Left ventricle myocardium inferior (tissue), 1 donor: ENCODE measurements at regions of chr11 and their contacts with region 1.

Region 1: DNA sequence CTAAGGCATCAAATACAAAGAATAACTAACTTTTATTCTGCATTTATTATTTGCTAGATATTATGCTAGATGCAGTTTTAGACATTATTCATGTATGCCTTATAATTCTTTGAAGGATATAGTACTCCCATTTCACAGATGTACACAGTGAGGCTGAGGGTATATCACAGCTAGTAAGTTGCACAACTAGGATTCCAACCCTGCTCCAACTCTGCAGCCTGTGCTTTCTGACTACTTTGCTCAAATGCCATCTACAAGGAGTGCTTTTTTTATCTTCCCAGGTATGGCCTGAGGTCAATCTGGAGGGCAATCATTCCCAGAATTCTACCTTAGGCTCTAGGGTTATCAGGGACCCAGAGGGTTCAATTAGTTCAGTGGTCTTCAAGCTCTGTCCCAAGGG is 28.4 kb downstream of the NUP160 start:
- DNase-seq: no peak
- H3K4me3 ChIP-seq: no peak overlapping the region
- H3K27ac ChIP-seq: no peak overlapping the region
- H3K4me1 ChIP-seq: no peaks in the 10 kb centered on the region
- H3K27me3 ChIP-seq: no peaks in the 10 kb centered on the region
- CTCF ChIP-seq: no peak

Region 2: DNA sequence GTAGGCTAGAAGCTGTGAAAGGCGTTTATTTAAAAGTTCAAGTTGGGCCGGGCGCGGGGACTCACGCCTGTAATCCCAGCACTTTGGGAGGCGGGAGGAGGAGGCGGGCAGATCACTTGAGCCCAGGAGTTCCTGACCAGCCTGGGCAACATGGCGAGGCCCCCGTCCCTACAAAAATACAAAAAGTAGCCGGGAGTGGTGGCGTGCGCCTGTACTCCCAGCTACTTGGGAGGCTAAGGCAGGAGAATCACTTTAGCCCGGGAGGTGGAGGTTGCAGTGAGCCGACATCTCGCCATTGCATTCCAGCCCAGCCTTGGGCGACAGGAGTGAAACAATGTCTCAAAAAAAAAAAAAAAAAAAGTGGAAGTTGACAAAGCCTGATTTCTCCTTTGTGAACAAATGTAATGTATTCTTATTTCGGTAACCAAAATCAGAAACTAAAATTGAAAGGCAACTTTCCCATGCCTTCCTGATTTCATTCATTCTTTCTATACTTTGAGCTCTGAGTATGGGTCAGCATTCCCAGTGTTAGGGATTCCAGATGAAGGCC is 253.5 kb before region 1 on chr11:
- intact Hi-C with region 1: no loop called
- DNase-seq: no peak
- H3K4me3 ChIP-seq: peak overlapping the region; percentile 98
- H3K27ac ChIP-seq: peak overlapping the region; percentile 82
- H3K4me1 ChIP-seq: peaks cover 28% of the 10 kb centered on the region
- H3K27me3 ChIP-seq: no peaks in the 10 kb centered on the region
- CTCF ChIP-seq: no peak

Region 3: DNA sequence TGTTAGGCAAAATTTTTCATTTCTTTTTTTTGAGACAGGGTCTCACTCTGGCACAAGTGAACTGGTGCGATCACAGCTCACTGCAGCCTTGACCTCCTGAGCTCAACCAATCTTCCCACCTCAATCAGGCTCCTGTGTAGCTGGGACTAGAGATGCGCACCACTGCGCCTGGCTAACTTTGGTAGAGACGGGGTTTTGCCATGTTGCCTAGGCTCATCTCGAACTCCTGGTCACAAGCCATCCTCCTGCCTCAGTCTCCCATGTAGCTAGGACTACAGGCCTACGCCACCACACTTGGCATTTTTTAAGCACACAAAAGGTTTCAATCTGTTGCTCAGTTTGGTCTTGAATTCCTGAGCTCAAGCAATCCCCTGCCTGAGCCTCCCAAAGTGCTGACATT is 61.7 kb before region 1 on chr11:
- intact Hi-C with region 1: loop called (anchors 10 kb)
- DNase-seq: no peak
- H3K4me3 ChIP-seq: no peak overlapping the region
- H3K27ac ChIP-seq: peak overlapping the region; percentile 66
- H3K4me1 ChIP-seq: peaks cover 33% of the 10 kb centered on the region
- H3K27me3 ChIP-seq: no peaks in the 10 kb centered on the region
- CTCF ChIP-seq: no peak

Region 4: GRCh38 chr11:47768001-47768612 is 51.6 kb before region 1 on chr11:
- intact Hi-C with region 1: no loop called
- DNase-seq: peak; percentile 78
- H3K4me3 ChIP-seq: peak overlapping the region; percentile 85
- H3K27ac ChIP-seq: peak overlapping the region; percentile 98
- H3K4me1 ChIP-seq: peaks cover 63% of the 10 kb centered on the region
- H3K27me3 ChIP-seq: no peaks in the 10 kb centered on the region
- CTCF ChIP-seq: no peak

Region 5: GRCh38 chr11:47863189-47863892 is 43.6 kb after region 1 on chr11:
- intact Hi-C with region 1: no loop called
- DNase-seq: no peak
- H3K4me3 ChIP-seq: no peak overlapping the region
- H3K27ac ChIP-seq: peak overlapping the region; percentile 52
- H3K4me1 ChIP-seq: peaks cover 7% of the 10 kb centered on the region
- H3K27me3 ChIP-seq: no peaks in the 10 kb centered on the region
- CTCF ChIP-seq: no peak